Mammary epithelial cell (primary cell): ENCODE measurements at regions of chr1 and their contacts with region 1.

Region 1: GRCh38 chr1:239386453-239387303 is at the start of gene CHRM3:
- DNase-seq: peak; percentile 61
- H3K4me3 ChIP-seq: peak within 1 kb of the TSS; percentile 13 to 47 (median 43)
- H3K27ac ChIP-seq: no peak within 1 kb of the TSS
- H3K4me1 ChIP-seq: peaks cover 19% of the 10 kb centered on the region
- H3K27me3 ChIP-seq: peaks cover 17% of the 10 kb centered on the region
- CTCF ChIP-seq: peak in 1 of 2 donors; percentile 29
- total RNA-seq, gene CHRM3: 43.7 TPM in 1 of 2 donors, not detected in the other

Region 2: GRCh38 chr1:239315631-239316217 is 71.0 kb before region 1 on chr1:
- CTCF ChIA-PET with region 1: no interaction called
- dilution Hi-C with region 1: no loop called
- in situ Hi-C with region 1: no loop called
- intact Hi-C with region 1: loop called (anchors 2 kb)
- DNase-seq: no peak
- H3K4me3 ChIP-seq: no peak overlapping the region
- H3K27ac ChIP-seq: no peak overlapping the region
- H3K4me1 ChIP-seq: no peaks in the 10 kb centered on the region
- H3K27me3 ChIP-seq: no peaks in the 10 kb centered on the region
- CTCF ChIP-seq: no peak

Region 3: DNA sequence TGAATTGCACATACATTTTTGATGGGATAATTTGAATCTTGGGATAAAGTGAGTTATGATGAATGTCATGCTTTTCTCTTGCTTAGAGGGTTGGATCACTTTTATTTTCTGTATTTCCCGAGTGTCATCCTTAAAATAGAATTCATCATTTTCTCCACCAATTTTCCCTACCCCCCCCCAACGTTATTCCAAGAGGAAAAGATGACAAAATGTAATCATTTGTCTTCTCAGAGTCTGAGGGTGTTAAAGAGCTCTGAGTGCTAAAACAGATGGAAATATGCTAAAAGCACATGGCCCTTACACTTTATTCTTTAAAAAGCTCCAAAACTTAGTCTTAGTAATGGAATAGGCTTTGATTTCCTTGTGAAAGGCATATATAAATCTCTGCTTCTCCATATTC is 81.1 kb after region 1 on chr1:
- CTCF ChIA-PET with region 1: no interaction called
- dilution Hi-C with region 1: no loop called
- in situ Hi-C with region 1: no loop called
- intact Hi-C with region 1: no loop called
- DNase-seq: no peak
- H3K4me3 ChIP-seq: no peak overlapping the region
- H3K27ac ChIP-seq: no peak overlapping the region
- H3K4me1 ChIP-seq: no peaks in the 10 kb centered on the region
- H3K27me3 ChIP-seq: no peaks in the 10 kb centered on the region
- CTCF ChIP-seq: no peak